CD4-positive, alpha-beta T cell (primary cell): ENCODE measurements at regions of chr1 and their contacts with region 1.

Region 1: GRCh38 chr1:41891199-41891896 is 27.4 kb downstream of the HIVEP3 start:
- DNase-seq: peak; percentile 37 to 87 (median 54)
- ATAC-seq: peak; percentile 99
- H3K4me3 ChIP-seq: peak overlapping the region; percentile 55
- H3K4me3 Mint-ChIP-seq: peak overlapping the region; percentile 77
- H3K27ac ChIP-seq: peak overlapping the region; percentile 57 to 77
- H3K27ac Mint-ChIP-seq: peak overlapping the region; percentile 90
- H3K4me1 ChIP-seq: peaks cover 68% of the 10 kb centered on the region
- H3K4me1 Mint-ChIP-seq: peaks cover 61% of the 10 kb centered on the region
- H3K27me3 ChIP-seq: no peaks in the 10 kb centered on the region
- H3K27me3 Mint-ChIP-seq: no peaks in the 10 kb centered on the region
- CTCF ChIP-seq: peak; percentile 61

Region 2: DNA sequence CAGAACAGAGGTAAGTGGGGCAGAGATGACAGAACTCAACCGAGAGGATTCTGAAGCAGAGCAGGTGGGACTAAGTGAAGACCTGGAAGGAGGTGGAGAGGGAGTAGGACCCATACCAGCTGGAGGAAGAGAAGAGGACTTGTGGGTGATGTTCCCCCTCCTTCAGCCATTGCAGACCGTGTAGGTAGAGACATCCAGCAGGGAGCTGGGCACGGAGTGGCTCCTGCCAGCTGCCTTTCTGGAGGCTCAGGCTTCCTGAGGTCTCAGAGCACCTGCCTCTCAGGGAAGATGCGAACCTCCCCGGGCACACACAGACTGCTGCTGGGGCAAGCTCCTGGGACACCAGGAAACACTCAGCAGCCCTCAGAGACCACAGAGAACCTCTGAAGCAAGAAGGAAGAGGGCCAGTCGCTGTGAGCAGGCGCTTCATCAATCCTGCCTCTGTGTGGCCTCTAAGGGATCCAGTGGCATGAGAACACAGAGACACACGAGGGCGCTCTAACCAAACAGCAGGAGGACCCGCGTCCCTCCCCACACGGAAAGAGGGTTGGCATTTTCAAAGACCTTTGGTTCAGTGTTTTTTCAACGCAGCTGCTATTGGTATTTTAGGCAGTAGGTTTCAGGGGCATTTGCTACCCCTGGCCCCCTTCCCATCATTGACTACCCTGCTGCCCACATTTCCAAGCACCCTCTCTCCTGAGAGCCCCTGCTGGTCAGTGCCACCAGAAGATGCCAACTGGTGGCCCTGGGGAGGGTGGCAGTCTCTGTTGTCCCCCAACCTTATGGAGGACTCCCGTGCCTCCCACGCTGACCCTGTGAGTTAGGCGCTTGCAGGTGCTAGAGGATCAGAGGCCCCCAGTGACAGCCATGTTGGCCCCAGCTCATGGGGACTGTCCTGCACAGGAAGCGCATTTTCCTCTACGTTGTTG is 317.3 kb before region 1 on chr1:
- CTCF ChIA-PET with region 1: no interaction called
- POLR2A ChIA-PET with region 1: interaction called, 6 read pairs
- intact Hi-C with region 1: loop called (anchors 1 to 5 kb)
- DNase-seq: peak; percentile 65 to 90 (median 76)
- ATAC-seq: peak; percentile 96
- H3K4me3 ChIP-seq: no peak overlapping the region
- H3K4me3 Mint-ChIP-seq: no peak overlapping the region
- H3K27ac ChIP-seq: no peak overlapping the region
- H3K27ac Mint-ChIP-seq: no peak overlapping the region
- H3K4me1 ChIP-seq: peaks cover 9% of the 10 kb centered on the region
- H3K4me1 Mint-ChIP-seq: peaks cover 12% of the 10 kb centered on the region
- H3K27me3 ChIP-seq: no peaks in the 10 kb centered on the region
- H3K27me3 Mint-ChIP-seq: no peaks in the 10 kb centered on the region
- CTCF ChIP-seq: peak; percentile 78

Region 3: DNA sequence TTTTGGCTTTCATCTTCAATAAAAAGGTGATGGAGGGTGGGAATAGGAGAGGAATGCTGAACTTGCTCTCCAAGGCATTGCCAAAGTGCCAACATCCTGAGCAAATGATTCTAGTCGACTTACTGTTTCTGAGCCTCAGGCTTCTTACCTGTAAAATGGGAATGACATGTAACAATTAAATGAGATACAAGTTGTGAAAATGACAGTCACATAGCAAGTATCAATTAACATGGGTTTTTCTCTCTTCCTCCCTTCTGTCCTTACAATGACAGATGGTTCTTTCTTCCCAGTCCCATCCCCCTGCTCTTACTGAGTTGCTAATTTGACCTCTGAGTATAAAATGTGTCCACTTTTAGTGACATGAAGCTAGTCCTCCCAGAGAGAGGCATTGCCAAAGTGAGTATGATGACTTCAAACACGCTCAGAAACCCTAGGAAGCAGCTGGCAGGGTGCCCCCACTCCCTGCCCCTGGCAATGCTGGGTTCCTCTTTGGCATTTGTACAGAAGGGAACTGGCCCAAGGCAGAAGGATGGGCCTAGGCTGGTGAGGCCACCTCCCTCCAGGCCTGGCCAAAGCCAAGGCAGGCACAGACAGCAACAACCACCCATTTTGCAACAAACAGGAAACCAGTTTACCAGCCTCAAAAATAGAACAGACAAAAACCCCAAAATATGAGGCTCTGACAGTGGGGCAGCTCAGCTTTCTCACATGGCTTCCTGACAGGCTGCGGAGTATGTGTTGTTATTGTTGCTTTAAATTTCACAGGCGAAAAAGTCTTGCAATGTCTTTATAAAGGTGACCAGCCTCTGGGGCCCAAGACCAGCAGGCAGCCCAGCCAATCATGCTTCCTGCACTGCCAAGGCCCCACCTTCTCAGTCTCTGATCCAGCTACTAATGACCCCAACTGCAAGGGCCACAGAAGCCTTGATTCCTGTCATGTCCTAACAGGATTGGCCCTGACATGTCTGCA is 88.5 kb before region 1 on chr1:
- CTCF ChIA-PET with region 1: no interaction called
- POLR2A ChIA-PET with region 1: interaction called, 11 read pairs
- intact Hi-C with region 1: loop called in 1 of 2 experiments (anchors 10 kb)
- DNase-seq: peak in 12 of 14 experiments; percentile 12 to 77 (median 23)
- ATAC-seq: peak; percentile 65
- H3K4me3 ChIP-seq: no peak overlapping the region
- H3K4me3 Mint-ChIP-seq: peak overlapping the region; percentile 54
- H3K27ac ChIP-seq: peak overlapping the region; percentile 44 to 77
- H3K27ac Mint-ChIP-seq: peak overlapping the region; percentile 90
- H3K4me1 ChIP-seq: peaks cover 84% of the 10 kb centered on the region
- H3K4me1 Mint-ChIP-seq: peaks cover 78% of the 10 kb centered on the region
- H3K27me3 ChIP-seq: no peaks in the 10 kb centered on the region
- H3K27me3 Mint-ChIP-seq: no peaks in the 10 kb centered on the region
- CTCF ChIP-seq: no peak

Region 4: DNA sequence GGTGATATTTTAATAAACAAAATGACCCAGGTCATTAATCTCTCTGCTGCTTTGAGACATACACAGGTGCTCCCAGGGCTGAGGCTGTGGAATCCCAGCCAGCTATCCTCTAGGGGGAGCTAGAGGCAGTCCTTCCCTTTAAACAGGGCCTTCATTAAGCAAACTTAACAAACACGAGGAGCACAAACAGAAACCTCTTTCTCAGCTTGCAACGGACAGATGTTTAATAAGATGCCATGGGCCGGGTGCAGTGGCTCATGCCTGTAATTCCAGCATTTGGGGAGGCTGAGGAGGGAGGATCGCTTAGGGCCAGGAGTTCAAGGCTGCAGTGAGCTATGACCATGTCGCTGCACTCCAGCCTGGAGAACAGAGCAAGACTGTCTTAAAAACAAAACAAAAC is 79.3 kb before region 1 on chr1:
- CTCF ChIA-PET with region 1: interaction called, 3 read pairs
- POLR2A ChIA-PET with region 1: no interaction called
- intact Hi-C with region 1: loop called (anchors 5 to 10 kb)
- DNase-seq: peak in 11 of 14 experiments; percentile 25 to 78 (median 33)
- ATAC-seq: peak; percentile 72
- H3K4me3 ChIP-seq: no peak overlapping the region
- H3K4me3 Mint-ChIP-seq: no peak overlapping the region
- H3K27ac ChIP-seq: no peak overlapping the region
- H3K27ac Mint-ChIP-seq: no peak overlapping the region
- H3K4me1 ChIP-seq: peaks cover 32% of the 10 kb centered on the region
- H3K4me1 Mint-ChIP-seq: peaks cover 32% of the 10 kb centered on the region
- H3K27me3 ChIP-seq: no peaks in the 10 kb centered on the region
- H3K27me3 Mint-ChIP-seq: no peaks in the 10 kb centered on the region
- CTCF ChIP-seq: peak; percentile 55

Region 5: DNA sequence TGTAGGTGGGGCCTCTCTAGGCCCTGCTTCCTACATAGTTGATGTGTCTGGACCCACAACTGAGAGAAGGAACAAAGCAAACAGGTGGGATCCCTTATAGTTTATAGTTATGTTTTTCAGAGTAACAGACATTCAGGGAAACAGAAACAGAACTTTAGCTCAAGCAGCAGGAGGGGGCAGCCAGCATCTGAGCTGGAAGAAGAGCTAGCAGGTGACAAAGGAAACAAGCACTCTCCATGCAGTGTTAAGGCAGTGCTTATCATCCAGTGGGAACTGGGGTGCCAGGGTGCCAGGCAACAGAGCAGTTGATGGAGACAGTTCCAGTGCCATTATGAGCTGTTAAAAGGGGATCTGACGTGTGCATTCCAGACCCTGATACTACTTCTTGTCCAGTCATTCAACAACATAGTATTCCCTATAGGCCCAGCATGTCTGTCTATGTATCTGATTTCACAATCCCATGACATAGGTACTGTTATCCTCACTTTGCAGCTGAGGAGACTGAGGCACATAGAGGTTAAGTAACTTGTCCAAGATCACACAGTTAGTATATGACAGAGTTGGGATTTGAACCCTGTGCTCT is 13.8 kb after region 1 on chr1:
- CTCF ChIA-PET with region 1: interaction called, 4 read pairs
- POLR2A ChIA-PET with region 1: interaction called, 12 read pairs
- intact Hi-C with region 1: no loop called
- DNase-seq: no peak
- ATAC-seq: no peak
- H3K4me3 ChIP-seq: no peak overlapping the region
- H3K4me3 Mint-ChIP-seq: no peak overlapping the region
- H3K27ac ChIP-seq: no peak overlapping the region
- H3K27ac Mint-ChIP-seq: no peak overlapping the region
- H3K4me1 ChIP-seq: peaks cover 61% of the 10 kb centered on the region
- H3K4me1 Mint-ChIP-seq: peaks cover 70% of the 10 kb centered on the region
- H3K27me3 ChIP-seq: no peaks in the 10 kb centered on the region
- H3K27me3 Mint-ChIP-seq: no peaks in the 10 kb centered on the region
- CTCF ChIP-seq: no peak

Region 6: DNA sequence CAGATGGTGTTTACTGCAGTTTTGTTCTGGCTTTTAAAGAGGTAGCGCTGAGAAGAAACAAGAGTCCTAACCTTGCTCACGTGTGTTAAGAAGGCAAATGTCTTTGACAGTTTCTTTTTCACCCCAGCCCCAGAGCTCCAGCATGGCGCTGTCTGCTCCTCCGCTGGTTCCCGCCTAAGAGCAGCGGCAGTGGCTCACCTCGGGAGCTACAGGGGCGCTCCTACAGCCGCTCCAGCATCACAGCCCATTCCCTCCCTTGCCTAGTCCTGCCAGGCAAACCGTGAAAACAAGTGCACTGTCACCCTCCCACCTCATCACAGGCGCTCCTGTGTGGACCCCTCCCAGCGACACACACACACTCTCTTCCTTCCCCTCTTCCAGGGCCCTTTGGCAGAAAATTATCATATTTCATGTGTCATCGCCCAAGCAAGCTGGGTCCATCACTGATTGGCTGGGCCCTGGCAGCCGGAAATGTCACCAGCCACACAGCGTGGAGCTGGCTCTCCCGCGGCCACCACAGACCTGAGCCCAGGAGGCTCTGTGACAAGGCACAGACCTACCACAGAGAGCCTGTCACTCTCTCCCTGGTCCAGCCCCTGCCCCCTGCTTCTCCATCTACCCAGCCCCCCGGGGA is 28.5 kb after region 1 on chr1:
- CTCF ChIA-PET with region 1: interaction called, 7 read pairs
- POLR2A ChIA-PET with region 1: interaction called, 108 read pairs
- intact Hi-C with region 1: loop called in 1 of 2 experiments (anchors 5 kb)
- DNase-seq: peak; percentile 56 to 94 (median 72)
- ATAC-seq: peak; percentile 83
- H3K4me3 ChIP-seq: peak overlapping the region; percentile 62
- H3K4me3 Mint-ChIP-seq: peak overlapping the region; percentile 84
- H3K27ac ChIP-seq: peak overlapping the region; percentile 57 to 60
- H3K27ac Mint-ChIP-seq: peak overlapping the region; percentile 95
- H3K4me1 ChIP-seq: peaks cover 51% of the 10 kb centered on the region
- H3K4me1 Mint-ChIP-seq: peaks cover 63% of the 10 kb centered on the region
- H3K27me3 ChIP-seq: no peaks in the 10 kb centered on the region
- H3K27me3 Mint-ChIP-seq: no peaks in the 10 kb centered on the region
- CTCF ChIP-seq: no peak

Region 7: GRCh38 chr1:41925712-41926111 is 34.4 kb after region 1 on chr1:
- CTCF ChIA-PET with region 1: interaction called, 7 read pairs
- POLR2A ChIA-PET with region 1: interaction called, 108 read pairs
- intact Hi-C with region 1: loop called in 1 of 2 experiments (anchors 5 kb)
- DNase-seq: no peak
- ATAC-seq: peak; percentile 61
- H3K4me3 ChIP-seq: no peak overlapping the region
- H3K4me3 Mint-ChIP-seq: no peak overlapping the region
- H3K27ac ChIP-seq: no peak overlapping the region
- H3K27ac Mint-ChIP-seq: no peak overlapping the region
- H3K4me1 ChIP-seq: no peaks in the 10 kb centered on the region
- H3K4me1 Mint-ChIP-seq: peaks cover 5% of the 10 kb centered on the region
- H3K27me3 ChIP-seq: no peaks in the 10 kb centered on the region
- H3K27me3 Mint-ChIP-seq: no peaks in the 10 kb centered on the region
- CTCF ChIP-seq: no peak

Region 8: DNA sequence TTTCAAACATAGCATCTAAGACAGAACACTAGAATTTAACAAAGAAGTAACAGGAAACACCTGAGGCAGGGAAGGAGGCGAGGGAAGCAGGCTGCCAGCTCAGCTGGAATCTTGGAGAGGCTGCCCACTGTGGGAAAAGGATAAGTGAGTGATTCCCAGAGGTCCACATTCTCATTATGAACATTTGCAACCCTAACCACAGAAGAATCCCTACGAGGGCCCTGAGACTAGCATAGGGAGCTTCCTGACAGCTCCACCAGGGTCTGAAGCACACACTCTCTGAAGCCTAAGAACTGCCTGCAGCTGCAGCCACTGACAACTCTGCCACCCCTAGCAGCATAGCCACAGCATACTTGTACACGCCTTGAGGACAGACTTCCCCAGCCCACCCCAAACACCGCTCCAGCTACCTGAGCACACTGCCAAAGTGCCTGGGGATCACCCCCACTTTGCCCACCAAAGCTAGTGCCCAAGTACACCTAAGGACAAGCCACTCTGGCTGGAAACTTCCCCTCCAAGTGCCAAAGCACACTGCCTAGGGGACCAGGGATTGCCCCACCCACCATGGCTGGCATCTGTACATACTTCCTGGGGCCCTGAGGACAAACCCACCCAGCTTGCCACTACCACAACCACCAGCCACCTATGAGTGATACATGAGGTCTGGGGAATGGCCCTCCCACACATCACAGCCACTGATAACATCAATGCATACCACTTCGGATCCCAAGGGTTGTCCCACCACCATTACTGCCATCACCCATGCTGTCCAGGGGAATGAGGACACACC is 349.8 kb after region 1 on chr1:
- CTCF ChIA-PET with region 1: no interaction called
- POLR2A ChIA-PET with region 1: no interaction called
- intact Hi-C with region 1: no loop called
- DNase-seq: peak in 1 of 14 experiments; percentile 5
- ATAC-seq: no peak
- H3K4me3 ChIP-seq: no peak overlapping the region
- H3K4me3 Mint-ChIP-seq: no peak overlapping the region
- H3K27ac ChIP-seq: no peak overlapping the region
- H3K27ac Mint-ChIP-seq: peak overlapping the region; percentile 15
- H3K4me1 ChIP-seq: peaks cover 7% of the 10 kb centered on the region
- H3K4me1 Mint-ChIP-seq: peaks cover 64% of the 10 kb centered on the region
- H3K27me3 ChIP-seq: no peaks in the 10 kb centered on the region
- H3K27me3 Mint-ChIP-seq: no peaks in the 10 kb centered on the region
- CTCF ChIP-seq: no peak

Region 9: GRCh38 chr1:42593486-42594100 is 702.2 kb after region 1 on chr1:
- CTCF ChIA-PET with region 1: no interaction called
- POLR2A ChIA-PET with region 1: no interaction called
- intact Hi-C with region 1: no loop called
- DNase-seq: no peak
- ATAC-seq: no peak
- H3K4me3 ChIP-seq: no peak overlapping the region
- H3K4me3 Mint-ChIP-seq: no peak overlapping the region
- H3K27ac ChIP-seq: no peak overlapping the region
- H3K27ac Mint-ChIP-seq: no peak overlapping the region
- H3K4me1 ChIP-seq: no peaks in the 10 kb centered on the region
- H3K4me1 Mint-ChIP-seq: no peaks in the 10 kb centered on the region
- H3K27me3 ChIP-seq: no peaks in the 10 kb centered on the region
- H3K27me3 Mint-ChIP-seq: no peaks in the 10 kb centered on the region
- CTCF ChIP-seq: no peak

Region 10: DNA sequence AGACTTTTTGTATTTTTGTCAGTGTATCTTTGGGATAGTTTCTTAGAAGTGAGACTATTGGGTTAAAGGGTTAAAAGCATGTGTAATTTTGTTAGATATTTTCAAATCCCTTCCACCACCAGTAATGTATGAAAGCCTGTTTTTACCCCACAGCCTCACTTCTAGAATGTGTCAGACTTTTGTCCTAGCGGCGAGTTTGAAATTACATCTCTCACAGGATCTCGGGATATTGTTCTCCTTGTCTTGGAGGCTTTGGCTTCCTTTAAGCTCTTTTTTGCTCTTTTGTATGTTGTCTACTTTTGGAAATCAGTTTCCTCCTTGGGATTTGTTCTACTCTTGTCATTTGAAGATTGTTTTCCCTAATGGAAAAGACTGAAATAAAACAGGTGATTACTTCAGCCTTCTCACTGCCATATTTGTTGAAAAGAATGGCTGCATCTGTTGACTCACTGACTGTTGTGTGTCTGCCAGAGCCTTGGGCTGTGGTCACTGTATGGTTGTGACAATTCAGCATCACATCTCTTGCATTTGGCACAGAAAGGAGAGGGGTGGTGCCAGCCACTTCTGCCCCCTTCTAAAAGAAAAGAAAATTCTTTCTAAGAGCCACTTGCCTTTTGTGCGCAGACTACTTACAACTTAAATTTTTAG is 1838.6 kb after region 1 on chr1:
- CTCF ChIA-PET with region 1: no interaction called
- POLR2A ChIA-PET with region 1: no interaction called
- intact Hi-C with region 1: no loop called
- DNase-seq: no peak
- ATAC-seq: no peak
- H3K4me3 ChIP-seq: no peak overlapping the region
- H3K4me3 Mint-ChIP-seq: no peak overlapping the region
- H3K27ac ChIP-seq: no peak overlapping the region
- H3K27ac Mint-ChIP-seq: no peak overlapping the region
- H3K4me1 ChIP-seq: no peaks in the 10 kb centered on the region
- H3K4me1 Mint-ChIP-seq: peaks cover 5% of the 10 kb centered on the region
- H3K27me3 ChIP-seq: no peaks in the 10 kb centered on the region
- H3K27me3 Mint-ChIP-seq: no peaks in the 10 kb centered on the region
- CTCF ChIP-seq: no peak